Dendritic cell treated with granulocyte-macrophage colony-stimulating factor and Interleukin-4, amounts not matched to agents 40 ng/mL and 50 ng/mL, for 4 days (primary cell): ENCODE measurements at regions of chr1 and their contacts with region 1.

Region 1: GRCh38 chr1:155176544-155177071 is 3.0 kb downstream of the TRIM46 start:
- H3K4me3 Mint-ChIP-seq: peak overlapping the region; percentile 8
- H3K27ac Mint-ChIP-seq: no peak overlapping the region
- H3K4me1 Mint-ChIP-seq: peaks cover 81% of the 10 kb centered on the region
- H3K27me3 Mint-ChIP-seq: peaks cover 19% of the 10 kb centered on the region

Region 2: DNA sequence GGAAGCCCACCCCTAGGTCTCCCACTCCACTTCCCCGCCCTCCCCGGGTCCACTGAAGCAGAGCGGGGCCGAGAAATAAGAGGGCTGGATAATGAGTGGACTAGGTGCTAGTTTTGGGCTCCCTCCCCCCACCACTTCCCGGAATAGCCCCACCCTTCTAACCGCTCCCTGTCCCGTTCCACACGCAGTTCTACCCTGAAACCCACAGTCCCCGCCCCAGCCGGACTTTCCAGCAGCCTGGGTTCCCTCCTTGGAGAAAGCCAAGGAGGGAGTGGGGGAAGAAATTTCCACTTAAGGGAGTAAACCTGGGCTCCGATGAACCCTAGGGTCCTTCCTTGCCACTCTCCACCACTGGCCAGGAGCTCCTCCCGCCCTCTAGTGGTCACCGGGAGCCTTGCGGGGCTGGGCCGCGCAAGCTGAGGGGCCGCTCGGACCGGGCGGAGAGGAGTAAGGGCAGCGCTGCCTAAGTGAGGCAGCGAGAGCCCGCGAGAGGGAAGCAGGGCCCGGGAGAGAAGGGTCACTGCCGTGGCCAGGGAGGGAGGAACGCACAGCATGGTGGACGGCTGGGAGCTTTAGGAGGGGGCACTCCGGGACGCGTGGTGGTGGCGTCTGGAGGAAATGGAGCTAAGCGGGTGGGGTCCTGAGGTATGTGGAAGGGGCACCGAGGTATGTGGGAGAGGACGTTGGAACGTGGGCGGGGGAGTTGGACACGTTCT is 16.8 kb after region 1 on chr1:
- intact Hi-C with region 1: loop called (anchors 2 kb)
- H3K4me3 Mint-ChIP-seq: peak overlapping the region; percentile 75
- H3K27ac Mint-ChIP-seq: peak overlapping the region; percentile 93
- H3K4me1 Mint-ChIP-seq: peaks cover 41% of the 10 kb centered on the region
- H3K27me3 Mint-ChIP-seq: peaks cover 19% of the 10 kb centered on the region

Region 3: GRCh38 chr1:155227261-155228095 is 50.9 kb after region 1 on chr1:
- intact Hi-C with region 1: loop called (anchors 5 kb)
- H3K4me3 Mint-ChIP-seq: peak overlapping the region; percentile 77
- H3K27ac Mint-ChIP-seq: peak overlapping the region; percentile 93
- H3K4me1 Mint-ChIP-seq: peaks cover 42% of the 10 kb centered on the region
- H3K27me3 Mint-ChIP-seq: peaks cover 3% of the 10 kb centered on the region